B cell (primary cell): ENCODE measurements at regions of chr19 and their contacts with region 1.

Region 1: GRCh38 chr19:39428283-39429112 is 7.3 kb downstream of the RPS16 start:
- DNase-seq: no peak
- ATAC-seq: no peak
- H3K4me3 ChIP-seq: no peak overlapping the region
- H3K4me3 Mint-ChIP-seq: no peak overlapping the region
- H3K27ac ChIP-seq: no peak overlapping the region
- H3K27ac Mint-ChIP-seq: peak overlapping the region; percentile 59
- H3K4me1 ChIP-seq: peaks cover 0 to 8% of the 10 kb centered on the region in 2 donors
- H3K4me1 Mint-ChIP-seq: peaks cover 16% of the 10 kb centered on the region
- H3K27me3 ChIP-seq: no peaks in the 10 kb centered on the region
- H3K27me3 Mint-ChIP-seq: no peaks in the 10 kb centered on the region
- CTCF ChIP-seq: no peak

Region 2: GRCh38 chr19:37484406-37485115 is 1943.9 kb before region 1 on chr19:
- CTCF ChIA-PET with region 1: no interaction called
- POLR2A ChIA-PET with region 1: no interaction called
- intact Hi-C with region 1: no loop called
- DNase-seq: no peak
- ATAC-seq: no peak
- H3K4me3 ChIP-seq: no peak overlapping the region
- H3K4me3 Mint-ChIP-seq: no peak overlapping the region
- H3K27ac ChIP-seq: no peak overlapping the region
- H3K27ac Mint-ChIP-seq: no peak overlapping the region
- H3K4me1 ChIP-seq: no peaks in the 10 kb centered on the region
- H3K4me1 Mint-ChIP-seq: no peaks in the 10 kb centered on the region
- H3K27me3 ChIP-seq: no peaks in the 10 kb centered on the region
- H3K27me3 Mint-ChIP-seq: no peaks in the 10 kb centered on the region
- CTCF ChIP-seq: no peak

Region 3: DNA sequence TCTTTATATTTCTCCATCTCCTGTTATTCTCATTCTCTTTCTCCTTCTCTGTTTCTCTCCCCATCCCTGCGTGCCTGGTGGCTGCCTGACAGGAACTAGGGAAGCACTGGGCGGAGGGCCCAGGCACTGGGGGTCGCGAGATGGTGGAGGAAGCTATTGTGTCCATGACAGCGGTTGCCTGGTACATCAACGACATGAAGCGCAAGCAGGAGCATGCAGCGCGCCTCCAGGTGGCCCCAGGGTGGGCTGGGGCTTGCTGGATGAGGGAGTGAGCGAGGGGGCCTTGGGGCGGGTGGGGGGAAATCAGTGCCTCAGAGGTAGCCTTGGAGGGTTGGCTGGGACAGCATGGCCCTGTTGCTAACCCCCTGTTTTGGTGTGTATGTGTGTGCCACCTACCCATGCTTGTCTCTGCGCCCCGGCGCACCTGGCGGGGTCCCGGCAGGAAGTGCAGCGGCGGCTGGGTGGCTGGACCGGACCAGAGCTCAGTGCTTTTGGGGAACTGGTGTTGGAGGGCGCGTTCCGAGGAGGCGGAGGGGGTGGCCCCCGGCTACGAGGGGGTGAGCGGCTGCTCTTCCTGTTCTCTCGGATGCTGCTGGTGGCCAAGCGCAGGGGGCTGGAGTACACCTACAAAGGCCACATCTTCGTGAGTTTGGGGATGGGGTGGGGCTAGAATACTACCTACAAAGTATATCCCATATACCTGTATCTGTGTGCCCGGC is 10.9 kb before region 1 on chr19:
- CTCF ChIA-PET with region 1: interaction called, 14 read pairs
- POLR2A ChIA-PET with region 1: interaction called, 8 read pairs
- intact Hi-C with region 1: no loop called
- DNase-seq: no peak
- ATAC-seq: no peak
- H3K4me3 ChIP-seq: no peak overlapping the region
- H3K4me3 Mint-ChIP-seq: peak overlapping the region; percentile 16
- H3K27ac ChIP-seq: peak overlapping the region in 1 of 2 donors; percentile 30
- H3K27ac Mint-ChIP-seq: peak overlapping the region; percentile 78
- H3K4me1 ChIP-seq: peaks cover 7 to 13% of the 10 kb centered on the region in 2 donors
- H3K4me1 Mint-ChIP-seq: peaks cover 22% of the 10 kb centered on the region
- H3K27me3 ChIP-seq: no peaks in the 10 kb centered on the region
- H3K27me3 Mint-ChIP-seq: no peaks in the 10 kb centered on the region
- CTCF ChIP-seq: no peak